ENCODE measurements at regions of chr6 and their contacts with region 1.

Region 1: GRCh38 chr6:79421707-79422484 is 115.3 kb downstream of the LCA5 start:
- DNase-seq: no peak

Region 2: GRCh38 chr6:79233611-79234149 is 188.2 kb before region 1 on chr6:
- intact Hi-C with region 1: loop called (anchors 2 kb)
- DNase-seq: peak; percentile 80 to 97 (median 86)

Region 3: DNA sequence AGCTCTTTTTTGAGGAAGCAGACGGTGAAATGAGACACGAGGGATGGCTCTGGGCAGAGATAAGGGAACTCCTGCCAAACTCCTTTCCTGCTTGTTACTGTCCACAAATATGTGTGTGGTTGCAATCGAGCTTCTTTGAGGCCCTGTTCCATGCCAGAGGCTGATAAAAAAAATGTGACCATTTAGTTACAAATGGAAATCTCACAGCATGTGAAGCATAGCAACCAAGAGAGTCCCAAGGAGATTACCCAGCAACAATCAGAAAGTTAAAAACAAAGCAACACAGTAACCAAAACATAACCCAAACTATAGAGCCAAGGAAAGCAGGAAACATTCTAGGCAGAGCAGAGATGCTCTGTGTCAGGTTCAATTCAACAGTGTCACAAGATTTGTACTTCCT is 152.0 kb before region 1 on chr6:
- intact Hi-C with region 1: no loop called
- DNase-seq: no peak

Region 4: DNA sequence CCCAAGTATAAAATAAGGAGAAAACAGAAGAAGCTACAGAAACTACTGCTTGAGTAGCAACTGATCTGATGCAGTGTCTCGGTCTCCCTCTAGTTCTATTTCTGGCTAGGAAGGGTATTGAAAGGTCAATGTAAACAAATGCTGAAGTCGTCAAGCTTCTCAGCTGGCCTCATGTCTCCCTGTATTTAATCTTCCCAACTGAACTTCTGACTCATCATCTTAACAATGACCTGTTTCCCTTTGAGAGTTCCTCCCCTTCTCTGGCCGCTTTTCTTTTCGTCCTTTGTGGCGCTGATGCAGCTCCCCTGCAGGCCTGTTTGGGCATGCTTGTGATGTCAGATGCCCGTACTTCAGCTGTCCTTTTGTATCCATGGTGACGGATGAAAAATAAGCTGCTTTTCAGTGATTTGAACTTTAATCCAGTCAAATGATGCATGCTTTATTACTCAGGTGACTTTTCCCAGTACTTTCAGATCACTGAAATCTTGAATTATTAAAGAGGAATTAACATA is 123.1 kb after region 1 on chr6:
- intact Hi-C with region 1: loop called (anchors 10 kb)
- DNase-seq: peak; percentile 34 to 90 (median 66)

Region 5: GRCh38 chr6:79710127-79710526 is 288.2 kb after region 1 on chr6:
- intact Hi-C with region 1: no loop called
- DNase-seq: peak in 1 of 10 donors; percentile 76